ENCODE measurements at regions of chr11 and their contacts with region 1.

Region 1: DNA sequence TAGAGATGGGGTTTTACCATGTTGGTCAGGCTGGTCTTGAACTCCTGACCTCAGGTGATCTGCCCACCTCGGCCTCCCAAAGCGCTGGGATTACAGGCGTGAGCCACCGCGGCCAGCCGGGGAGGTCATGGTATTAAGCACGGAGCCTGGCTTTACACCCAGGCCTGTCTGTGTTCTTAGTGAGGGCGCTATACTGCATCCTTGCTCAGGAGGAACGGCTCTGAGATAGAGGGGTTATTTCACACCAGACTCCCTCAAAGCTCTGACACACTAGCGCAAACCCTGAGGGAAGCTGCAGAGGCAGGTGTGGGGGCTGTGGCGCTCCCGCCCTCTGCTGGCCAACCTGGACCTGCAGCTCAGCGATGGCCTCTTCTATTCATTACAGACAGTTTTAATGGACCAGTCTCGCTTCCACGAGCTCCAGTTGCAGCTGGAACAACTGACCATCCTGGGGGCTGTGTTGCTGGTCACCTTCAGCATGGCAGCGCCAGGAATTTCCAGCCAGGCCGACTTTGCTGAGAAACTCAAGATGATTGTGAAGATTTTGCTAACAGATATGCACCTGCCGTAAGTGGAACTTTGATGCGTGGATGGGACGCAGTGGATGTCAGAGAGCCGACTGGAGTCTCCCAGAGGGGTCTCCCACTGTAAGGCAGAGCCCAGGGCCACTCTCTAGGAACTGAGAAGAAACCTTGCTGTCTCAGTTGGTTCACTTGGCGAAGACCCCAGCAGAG is 26.2 kb downstream of the TCP11L1 start:
- DNase-seq: peak; percentile 82
- H3K4me3 Mint-ChIP-seq: no peak overlapping the region
- H3K27ac Mint-ChIP-seq: no peak overlapping the region
- H3K4me1 Mint-ChIP-seq: peaks cover 31% of the 10 kb centered on the region
- H3K27me3 Mint-ChIP-seq: no peaks in the 10 kb centered on the region

Region 2: DNA sequence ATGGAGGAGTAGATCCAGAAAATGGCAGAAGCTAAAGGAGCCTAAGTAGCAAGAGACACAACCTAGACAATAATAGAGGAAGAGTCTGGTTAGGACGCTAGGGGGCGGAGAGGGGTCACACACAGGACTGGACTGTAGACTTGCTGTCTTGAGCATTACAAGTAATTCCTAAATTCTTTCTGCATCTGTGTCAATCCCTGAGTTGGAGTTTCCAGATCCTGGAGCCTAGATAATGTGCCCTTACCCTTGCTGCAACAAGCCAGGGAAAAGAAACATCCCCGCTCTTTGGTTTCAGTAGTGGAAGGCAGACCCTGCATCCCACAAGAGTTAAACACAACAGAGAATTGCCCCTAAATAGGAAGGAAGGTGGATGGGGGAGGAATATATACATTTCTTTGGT is 256.3 kb before region 1 on chr11:
- CTCF ChIA-PET with region 1: interaction called, 31 read pairs
- POLR2A ChIA-PET with region 1: no interaction called
- intact Hi-C with region 1: loop called (anchors 1 kb)
- DNase-seq: peak; percentile 71
- H3K4me3 Mint-ChIP-seq: no peak overlapping the region
- H3K27ac Mint-ChIP-seq: no peak overlapping the region
- H3K4me1 Mint-ChIP-seq: no peaks in the 10 kb centered on the region
- H3K27me3 Mint-ChIP-seq: no peaks in the 10 kb centered on the region

Region 3: DNA sequence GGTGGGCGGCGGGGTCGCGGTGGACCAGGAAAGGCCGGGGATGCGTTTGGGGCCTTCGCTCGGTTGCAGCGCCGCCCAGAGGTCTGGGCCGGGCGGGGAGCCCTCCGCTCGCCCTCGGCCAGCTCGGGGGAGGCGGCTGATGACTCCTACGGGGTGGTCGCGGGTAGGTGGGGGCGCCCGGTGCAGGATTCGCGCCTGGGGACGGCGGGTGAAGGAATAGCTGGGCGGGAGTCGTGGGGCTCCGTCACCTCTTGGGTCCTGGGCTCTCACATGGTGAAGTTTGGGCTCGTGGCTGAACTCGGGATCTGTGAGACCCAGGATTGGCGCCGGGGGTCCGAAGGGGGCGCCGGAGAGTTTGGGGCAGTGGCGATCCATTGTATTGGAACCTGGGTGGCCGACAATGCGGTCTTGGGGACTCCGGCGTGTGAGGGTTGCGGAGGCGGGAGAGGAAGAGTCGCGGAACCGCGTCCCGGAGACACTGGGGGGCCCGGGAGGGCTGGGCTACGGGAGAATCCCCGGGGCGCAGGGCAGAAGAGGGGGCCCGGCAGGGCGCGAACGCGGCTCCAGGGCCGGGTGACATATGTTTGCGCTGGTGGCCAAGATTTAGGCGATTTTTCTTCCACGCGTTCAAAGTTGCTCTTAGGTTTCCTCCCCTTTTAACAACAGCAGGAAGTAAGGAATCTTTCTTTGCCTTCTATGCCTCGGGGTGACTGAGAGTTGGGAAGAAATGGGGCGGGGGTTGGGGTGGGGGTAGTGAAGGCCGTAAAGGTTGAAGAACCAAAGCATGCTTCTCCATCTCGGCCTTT is 172.1 kb before region 1 on chr11:
- CTCF ChIA-PET with region 1: interaction called, 13 read pairs
- POLR2A ChIA-PET with region 1: interaction called, 4 read pairs
- intact Hi-C with region 1: loop called (anchors 1 kb)
- DNase-seq: peak; percentile 68
- H3K4me3 Mint-ChIP-seq: peak overlapping the region; percentile 97
- H3K27ac Mint-ChIP-seq: peak overlapping the region; percentile 90
- H3K4me1 Mint-ChIP-seq: peaks cover 32% of the 10 kb centered on the region
- H3K27me3 Mint-ChIP-seq: no peaks in the 10 kb centered on the region

Region 4: GRCh38 chr11:33015621-33016551 is 49.7 kb before region 1 on chr11 and contains the start of gene DEPDC7:
- CTCF ChIA-PET with region 1: interaction called, 8 read pairs
- POLR2A ChIA-PET with region 1: interaction called, 3 read pairs
- intact Hi-C with region 1: loop called (anchors 1 kb)
- DNase-seq: peak; percentile 83
- H3K4me3 Mint-ChIP-seq: peak within 1 kb of the TSS; percentile 75
- H3K27ac Mint-ChIP-seq: no peak within 1 kb of the TSS
- H3K4me1 Mint-ChIP-seq: peaks cover 33% of the 10 kb centered on the region
- H3K27me3 Mint-ChIP-seq: peaks cover 29% of the 10 kb centered on the region
- total RNA-seq, gene DEPDC7: 0.86 to 0.90 TPM

Region 5: GRCh38 chr11:33052231-33052630 is 13.4 kb before region 1 on chr11:
- CTCF ChIA-PET with region 1: interaction called, 10 read pairs
- POLR2A ChIA-PET with region 1: interaction called, 3 read pairs
- intact Hi-C with region 1: no loop called
- DNase-seq: no peak
- H3K4me3 Mint-ChIP-seq: no peak overlapping the region
- H3K27ac Mint-ChIP-seq: no peak overlapping the region
- H3K4me1 Mint-ChIP-seq: no peaks in the 10 kb centered on the region
- H3K27me3 Mint-ChIP-seq: no peaks in the 10 kb centered on the region

Region 6: DNA sequence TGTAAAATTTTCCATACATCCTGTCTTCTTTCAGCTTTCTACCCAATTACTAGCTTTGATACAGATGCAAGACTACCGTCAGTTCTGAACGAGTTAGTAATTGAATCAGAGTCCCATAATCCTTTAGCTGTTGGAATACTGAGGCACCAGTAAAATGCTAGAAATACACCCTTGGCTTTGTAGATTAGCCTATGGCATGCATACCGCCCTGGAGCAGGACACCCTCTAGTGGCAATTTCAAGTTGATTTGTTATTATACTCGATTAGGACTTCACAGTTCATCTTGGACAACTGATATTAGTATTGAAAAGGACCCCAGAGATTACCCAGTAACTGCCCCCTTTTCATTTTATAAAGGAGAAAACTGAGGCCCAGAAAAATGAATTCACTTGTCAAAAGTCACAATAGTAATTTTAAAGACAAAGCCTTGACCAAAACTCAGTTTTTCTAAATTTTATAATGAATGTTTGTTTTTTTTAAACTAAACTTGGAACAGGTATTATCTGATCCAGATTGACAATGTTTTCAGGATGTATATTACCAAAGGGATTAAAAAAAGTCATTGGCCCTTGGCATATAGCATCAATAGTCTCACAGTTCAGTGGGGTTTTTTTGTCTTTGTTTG is 264.2 kb after region 1 on chr11:
- CTCF ChIA-PET with region 1: no interaction called
- POLR2A ChIA-PET with region 1: no interaction called
- intact Hi-C with region 1: loop called (anchors 5 kb)
- DNase-seq: peak; percentile 55
- H3K4me3 Mint-ChIP-seq: no peak overlapping the region
- H3K27ac Mint-ChIP-seq: no peak overlapping the region
- H3K4me1 Mint-ChIP-seq: peaks cover 14% of the 10 kb centered on the region
- H3K27me3 Mint-ChIP-seq: no peaks in the 10 kb centered on the region

Region 7: GRCh38 chr11:33617665-33618350 is 552.2 kb after region 1 on chr11:
- CTCF ChIA-PET with region 1: no interaction called
- POLR2A ChIA-PET with region 1: no interaction called
- intact Hi-C with region 1: no loop called
- DNase-seq: no peak
- H3K4me3 Mint-ChIP-seq: no peak overlapping the region
- H3K27ac Mint-ChIP-seq: no peak overlapping the region
- H3K4me1 Mint-ChIP-seq: no peaks in the 10 kb centered on the region
- H3K27me3 Mint-ChIP-seq: peaks cover 8% of the 10 kb centered on the region

Measured in activated CD4-positive, alpha-beta memory T cell treated with anti-CD3 and anti-CD28 coated beads for 36 hours (primary cell).